PC-3 (cell line): ENCODE measurements at regions of chr1 and their contacts with region 1.

Region 1: DNA sequence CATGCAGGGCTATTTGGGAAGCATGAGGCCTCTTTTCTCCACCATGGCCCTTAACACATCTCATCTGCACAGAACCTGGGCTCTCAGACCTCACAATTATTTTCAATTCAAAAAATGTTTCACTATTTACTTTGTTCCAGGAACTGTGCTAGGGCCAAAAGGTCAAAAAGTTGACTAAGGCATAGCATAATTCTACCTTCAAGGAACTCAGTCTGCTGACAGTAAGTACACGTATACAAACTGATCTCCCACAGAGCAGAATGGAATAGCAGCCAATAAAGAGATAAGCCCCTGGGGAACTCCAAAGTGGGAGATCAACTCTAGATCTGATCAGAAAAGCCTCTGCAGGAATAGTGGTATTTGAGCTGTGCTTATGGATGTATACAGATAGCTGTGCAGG is 33.6 kb upstream of the GJA8 start:
- DNase-seq: no peak
- ATAC-seq: no peak
- H3K4me3 ChIP-seq: no peak overlapping the region
- H3K27ac ChIP-seq: no peak overlapping the region
- H3K4me1 ChIP-seq: no peaks in the 10 kb centered on the region
- H3K27me3 ChIP-seq: no peaks in the 10 kb centered on the region
- CTCF ChIP-seq: no peak

Region 2: DNA sequence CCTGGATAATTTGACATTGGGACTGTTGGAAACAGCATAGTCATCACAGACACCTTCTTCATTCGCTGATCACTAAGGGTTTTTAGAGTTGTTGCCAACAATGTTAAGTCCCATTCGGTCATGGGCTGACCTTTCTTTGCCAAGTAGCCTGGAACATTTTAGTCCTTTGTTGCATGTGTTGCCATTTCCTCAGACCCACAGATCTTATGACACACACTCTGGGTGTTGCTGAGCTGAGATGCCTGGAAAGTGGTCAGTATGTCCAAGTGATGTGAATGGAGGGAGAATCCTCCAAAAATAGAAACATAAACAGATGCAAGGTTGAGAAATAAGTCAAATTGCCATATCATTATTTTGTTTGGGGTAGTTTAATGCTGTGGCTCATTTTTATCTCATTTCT is 47.1 kb before region 1 on chr1:
- CTCF ChIA-PET with region 1: no interaction called
- POLR2A ChIA-PET with region 1: interaction called, 12 read pairs
- intact Hi-C with region 1: no loop called
- DNase-seq: no peak
- ATAC-seq: no peak; the same call in 1 of the 2 replicates
- H3K4me3 ChIP-seq: no peak overlapping the region
- H3K27ac ChIP-seq: no peak overlapping the region
- H3K4me1 ChIP-seq: peaks cover 7% of the 10 kb centered on the region; the same call in 1 of the 2 replicates
- H3K27me3 ChIP-seq: no peaks in the 10 kb centered on the region
- CTCF ChIP-seq: no peak

Region 3: DNA sequence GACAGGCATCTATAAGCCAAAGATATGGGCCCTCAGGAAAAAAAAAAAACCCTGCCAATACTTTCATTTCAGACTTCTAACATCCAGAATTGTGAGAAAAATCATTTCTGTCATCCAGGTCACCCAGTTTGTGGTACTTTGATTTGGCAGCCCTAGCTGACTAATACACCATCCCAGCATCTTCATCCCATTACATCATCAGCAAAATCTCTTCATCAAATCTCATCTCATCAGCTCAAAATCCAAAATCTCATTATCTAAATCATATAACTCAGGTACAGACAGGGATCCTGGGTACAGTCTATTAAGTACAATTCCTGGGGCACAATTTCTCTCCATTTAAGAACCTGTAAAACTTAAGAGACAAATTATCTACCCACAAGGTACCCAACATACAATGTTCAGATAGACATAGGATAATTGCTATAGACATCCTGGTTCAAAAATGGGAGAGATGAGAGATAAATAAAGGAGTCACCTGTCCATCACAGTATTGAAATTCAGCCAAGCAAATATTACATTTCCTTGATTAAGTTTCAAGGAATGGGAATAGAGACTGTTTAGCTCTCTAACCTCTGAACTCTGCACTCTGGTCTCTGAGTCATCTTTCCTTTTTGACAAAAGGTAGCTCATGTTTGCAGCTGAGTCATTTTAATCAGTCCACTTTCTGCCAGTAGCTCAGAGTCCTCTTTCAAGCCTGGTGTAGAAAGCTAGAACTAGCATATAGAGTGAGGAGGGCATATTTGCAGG is 18.0 kb before region 1 on chr1:
- CTCF ChIA-PET with region 1: no interaction called
- POLR2A ChIA-PET with region 1: no interaction called
- intact Hi-C with region 1: loop called (anchors 2 kb)
- DNase-seq: peak; percentile 94
- ATAC-seq: peak; percentile 84
- H3K4me3 ChIP-seq: no peak overlapping the region
- H3K27ac ChIP-seq: peak overlapping the region; percentile 36
- H3K4me1 ChIP-seq: peaks cover 43% of the 10 kb centered on the region
- H3K27me3 ChIP-seq: no peaks in the 10 kb centered on the region
- CTCF ChIP-seq: no peak